ENCODE measurements at regions of chr7 and their contacts with region 1.

Region 1: DNA sequence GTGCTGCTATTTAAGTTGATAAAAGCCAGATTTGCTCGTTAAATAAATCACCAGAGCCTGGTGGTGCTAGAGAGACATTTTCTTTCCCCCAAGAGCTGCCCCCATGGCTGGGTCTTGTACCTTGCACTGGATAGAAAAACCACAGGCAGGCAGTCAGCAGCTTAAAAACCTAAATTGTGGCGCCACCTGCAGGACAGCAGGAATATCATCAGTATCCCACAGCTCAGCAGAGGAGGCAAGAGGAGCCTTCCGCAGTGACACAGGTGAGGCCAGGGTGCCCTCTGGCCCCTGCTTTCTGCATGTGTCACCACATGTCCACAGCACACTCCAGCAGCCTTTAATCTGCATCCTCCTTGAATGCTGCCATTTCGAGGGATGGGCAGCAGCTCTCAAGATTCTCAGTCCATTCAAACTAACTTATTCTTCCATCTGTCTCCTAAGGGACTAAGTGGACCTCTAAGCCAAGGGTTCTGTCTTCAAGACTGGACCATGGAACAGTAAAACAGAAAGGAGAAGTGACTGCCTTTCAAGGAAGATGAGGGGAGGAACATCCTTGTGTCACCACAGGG is 4.5 kb upstream of the PLXNA4 start:
- DNase-seq: peak; percentile 84
- H3K4me3 Mint-ChIP-seq: no peak overlapping the region
- H3K27ac Mint-ChIP-seq: no peak overlapping the region
- H3K4me1 Mint-ChIP-seq: no peaks in the 10 kb centered on the region
- H3K27me3 Mint-ChIP-seq: peaks cover 28% of the 10 kb centered on the region

Region 2: GRCh38 chr7:131688738-131689661 is 891.8 kb before region 1 on chr7:
- CTCF ChIA-PET with region 1: interaction called, 5 read pairs
- intact Hi-C with region 1: loop called (anchors 2 kb)
- DNase-seq: peak; percentile 74
- H3K4me3 Mint-ChIP-seq: no peak overlapping the region
- H3K27ac Mint-ChIP-seq: no peak overlapping the region
- H3K4me1 Mint-ChIP-seq: no peaks in the 10 kb centered on the region
- H3K27me3 Mint-ChIP-seq: peaks cover 40% of the 10 kb centered on the region

Region 3: GRCh38 chr7:131945313-131945911 is 635.4 kb before region 1 on chr7:
- CTCF ChIA-PET with region 1: interaction called, 4 read pairs
- intact Hi-C with region 1: loop called (anchors 1 kb)
- DNase-seq: peak; percentile 44
- H3K4me3 Mint-ChIP-seq: no peak overlapping the region
- H3K27ac Mint-ChIP-seq: no peak overlapping the region
- H3K4me1 Mint-ChIP-seq: no peaks in the 10 kb centered on the region
- H3K27me3 Mint-ChIP-seq: peaks cover 30% of the 10 kb centered on the region

Region 4: GRCh38 chr7:132394283-132395198 is 186.3 kb before region 1 on chr7:
- CTCF ChIA-PET with region 1: interaction called, 32 read pairs
- intact Hi-C with region 1: loop called (anchors 1 kb)
- DNase-seq: peak; percentile 43
- H3K4me3 Mint-ChIP-seq: no peak overlapping the region
- H3K27ac Mint-ChIP-seq: no peak overlapping the region
- H3K4me1 Mint-ChIP-seq: peaks cover 5% of the 10 kb centered on the region
- H3K27me3 Mint-ChIP-seq: peaks cover 2% of the 10 kb centered on the region

Region 5: GRCh38 chr7:132568962-132569361 is 11.8 kb before region 1 on chr7:
- CTCF ChIA-PET with region 1: interaction called, 18 read pairs
- intact Hi-C with region 1: no loop called
- DNase-seq: no peak
- H3K4me3 Mint-ChIP-seq: no peak overlapping the region
- H3K27ac Mint-ChIP-seq: no peak overlapping the region
- H3K4me1 Mint-ChIP-seq: peaks cover 7% of the 10 kb centered on the region
- H3K27me3 Mint-ChIP-seq: peaks cover 65% of the 10 kb centered on the region

Region 6: GRCh38 chr7:133434055-133434865 is 853.5 kb after region 1 on chr7:
- CTCF ChIA-PET with region 1: no interaction called
- intact Hi-C with region 1: loop called (anchors 5 kb)
- DNase-seq: peak; percentile 8
- H3K4me3 Mint-ChIP-seq: no peak overlapping the region
- H3K27ac Mint-ChIP-seq: no peak overlapping the region
- H3K4me1 Mint-ChIP-seq: peaks cover 2% of the 10 kb centered on the region
- H3K27me3 Mint-ChIP-seq: no peaks in the 10 kb centered on the region